Endothelial cell of umbilical vein (primary cell): ENCODE measurements at regions of chr19 and their contacts with region 1.

Region 1: GRCh38 chr19:45405435-45406225 is 761 bp upstream of the PPP1R13L start:
- DNase-seq: peak; percentile 93
- H3K4me3 ChIP-seq: peak overlapping the region; percentile 73 to 83 (median 81)
- H3K27ac ChIP-seq: peak overlapping the region; percentile 88
- H3K4me1 ChIP-seq: peaks cover 27% of the 10 kb centered on the region
- H3K27me3 ChIP-seq: no peaks in the 10 kb centered on the region
- CTCF ChIP-seq: no peak
- POLR2A ChIP-seq: peak; percentile 43

Region 2: GRCh38 chr19:45370410-45371204 is 35.0 kb before region 1 on chr19 and contains the start of gene ERCC2:
- CTCF ChIA-PET with region 1: interaction called, 18 read pairs
- POLR2A ChIA-PET with region 1: no interaction called
- dilution Hi-C with region 1: no loop called
- intact Hi-C with region 1: no loop called
- DNase-seq: peak; percentile 99
- H3K4me3 ChIP-seq: peak within 1 kb of the TSS; percentile 76 to 98 (median 86)
- H3K27ac ChIP-seq: peak within 1 kb of the TSS; percentile 67
- H3K4me1 ChIP-seq: peaks cover 5% of the 10 kb centered on the region
- H3K27me3 ChIP-seq: no peaks in the 10 kb centered on the region
- CTCF ChIP-seq: no peak
- POLR2A ChIP-seq: peak; percentile 19
- total RNA-seq, gene ERCC2: 55.4 and 59.9 TPM in 2 replicates

Region 3: DNA sequence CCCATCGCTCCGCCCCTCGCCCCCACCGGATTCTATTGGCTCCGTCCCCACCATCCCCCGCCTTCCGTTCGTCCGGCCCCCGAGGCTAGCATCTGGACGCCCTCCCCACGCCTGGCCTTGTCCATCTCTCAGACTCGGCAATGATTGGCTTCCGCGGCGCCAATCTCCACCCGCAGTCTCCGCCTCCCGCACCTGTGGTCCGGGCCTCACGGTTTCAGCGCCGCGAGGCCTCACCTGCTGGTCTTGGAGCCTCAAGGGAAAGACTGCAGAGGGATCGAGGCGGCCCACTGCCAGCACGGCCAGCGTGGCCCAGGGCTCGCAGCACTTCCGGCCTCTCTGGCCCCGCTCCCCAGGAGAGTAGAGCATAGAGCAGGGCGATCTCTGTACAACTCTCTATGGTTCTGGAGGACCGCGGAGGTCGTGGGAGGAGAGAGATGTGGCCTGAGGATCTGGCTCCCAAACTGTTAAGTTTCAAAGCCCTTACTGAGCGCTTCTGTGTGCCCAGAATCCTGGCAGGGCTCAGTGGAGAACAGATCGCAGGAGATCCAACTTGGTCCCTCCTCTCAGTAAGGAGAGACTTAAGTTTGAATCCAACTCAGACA is 18.1 kb after region 1 on chr19 and contains the start of gene ERCC1:
- CTCF ChIA-PET with region 1: interaction called, 18 read pairs
- POLR2A ChIA-PET with region 1: interaction called, 3 read pairs
- dilution Hi-C with region 1: no loop called
- intact Hi-C with region 1: loop called (anchors 1 kb)
- DNase-seq: peak; percentile 94
- H3K4me3 ChIP-seq: peak within 1 kb of the TSS; percentile 59 to 74 (median 73)
- H3K27ac ChIP-seq: peak within 1 kb of the TSS; percentile 100
- H3K4me1 ChIP-seq: peaks cover 30% of the 10 kb centered on the region
- H3K27me3 ChIP-seq: no peaks in the 10 kb centered on the region
- CTCF ChIP-seq: no peak
- POLR2A ChIP-seq: peak; percentile 61
- total RNA-seq, gene ERCC1: 81.8 and 82.6 TPM in 2 replicates

Region 4: DNA sequence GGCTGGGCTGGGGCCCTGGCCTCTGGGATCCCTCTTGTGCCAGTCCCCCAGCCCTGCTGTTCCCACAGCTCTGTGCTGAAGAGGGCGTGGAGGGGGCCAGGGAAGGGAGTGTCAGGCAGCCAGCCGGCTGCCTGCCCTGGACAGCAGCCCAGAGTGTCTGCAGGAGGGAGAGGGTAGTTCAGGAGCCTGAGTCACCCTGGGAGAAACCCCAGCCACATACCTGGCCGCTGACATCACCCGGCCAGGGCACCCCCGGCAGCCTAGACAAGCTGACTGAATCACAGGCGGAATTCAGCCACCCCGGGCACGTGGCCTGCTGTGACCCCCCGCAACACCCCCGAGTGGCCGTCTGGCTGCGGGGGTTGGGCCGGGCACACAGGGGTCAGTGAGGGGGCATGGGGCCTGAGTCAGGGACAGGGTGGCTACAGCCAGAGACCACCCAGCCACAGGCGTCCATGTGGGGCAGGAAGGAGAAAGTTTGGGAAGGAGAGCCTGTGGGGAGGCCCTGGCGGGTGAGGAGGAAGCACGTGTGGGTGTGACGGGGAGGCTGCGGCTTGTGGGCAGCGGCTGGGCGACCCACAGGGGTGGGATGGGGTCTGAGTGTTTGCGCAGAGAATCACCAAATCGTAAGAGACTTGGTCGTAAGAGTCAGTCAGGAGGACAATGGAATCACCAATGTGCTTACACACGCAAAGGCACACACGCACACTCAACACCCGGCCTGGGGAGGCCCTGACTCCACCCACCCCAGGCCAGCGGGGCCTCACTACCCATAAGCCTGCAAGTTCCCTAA is 50.3 kb after region 1 on chr19:
- CTCF ChIA-PET with region 1: no interaction called
- POLR2A ChIA-PET with region 1: no interaction called
- dilution Hi-C with region 1: no loop called
- intact Hi-C with region 1: loop called (anchors 1 kb)
- DNase-seq: peak; percentile 98
- H3K4me3 ChIP-seq: no peak overlapping the region
- H3K27ac ChIP-seq: peak overlapping the region; percentile 90
- H3K4me1 ChIP-seq: peaks cover 19% of the 10 kb centered on the region
- H3K27me3 ChIP-seq: no peaks in the 10 kb centered on the region
- CTCF ChIP-seq: no peak
- POLR2A ChIP-seq: no peak

Region 5: DNA sequence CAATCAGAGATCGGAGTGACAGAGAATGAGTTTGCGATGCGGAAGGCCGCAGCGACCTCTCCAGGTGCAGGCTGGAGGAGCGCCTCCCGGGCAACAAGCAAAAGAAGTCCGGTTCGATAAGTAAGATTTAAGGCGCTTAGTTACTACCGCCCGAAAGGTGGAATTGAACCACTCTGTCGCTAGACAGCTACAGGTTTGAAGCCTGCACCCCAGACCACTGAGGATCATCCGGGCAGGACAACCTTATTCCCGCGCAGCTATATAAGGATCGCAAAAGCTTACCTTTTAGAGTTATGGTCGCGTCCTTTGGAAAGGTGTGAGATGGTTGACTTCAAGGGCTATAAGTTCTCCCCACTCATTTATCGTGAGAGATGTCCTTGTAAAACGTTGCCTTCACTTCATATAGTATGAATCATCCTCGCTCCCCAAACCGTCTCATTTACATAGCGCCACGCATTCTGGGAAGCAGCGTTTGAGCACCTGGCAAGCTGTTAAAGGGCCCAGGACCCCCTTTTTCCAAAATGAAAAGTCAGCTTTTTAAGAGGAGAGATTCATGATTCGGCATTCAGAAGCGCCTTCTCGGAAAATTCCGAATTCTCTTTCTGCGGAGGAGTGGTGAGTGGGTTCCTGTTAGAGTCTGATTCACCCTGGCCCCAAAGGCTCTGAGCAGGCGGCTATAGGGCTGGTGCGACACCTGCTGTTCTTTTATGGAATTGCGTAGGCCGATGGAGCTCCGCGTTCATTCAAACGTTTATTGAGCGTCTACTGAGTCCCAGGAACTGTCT is 73.0 kb after region 1 on chr19:
- CTCF ChIA-PET with region 1: interaction called, 101 read pairs
- POLR2A ChIA-PET with region 1: no interaction called
- dilution Hi-C with region 1: no loop called
- intact Hi-C with region 1: loop called (anchors 1 kb)
- DNase-seq: peak; percentile 92
- H3K4me3 ChIP-seq: peak overlapping the region; percentile 13 to 71 (median 46)
- H3K27ac ChIP-seq: peak overlapping the region; percentile 96
- H3K4me1 ChIP-seq: peaks cover 3% of the 10 kb centered on the region
- H3K27me3 ChIP-seq: no peaks in the 10 kb centered on the region
- CTCF ChIP-seq: peak; percentile 91 to 95
- POLR2A ChIP-seq: no peak